Natural killer cell (primary cell): ENCODE measurements at regions of chr2 and their contacts with region 1.

Region 1: GRCh38 chr2:43131024-43131889 is 95.1 kb downstream of the ZFP36L2 start:
- DNase-seq: peak; percentile 82 to 92
- ATAC-seq: peak; percentile 63 to 81 (median 72)
- H3K4me3 ChIP-seq: no peak overlapping the region
- H3K4me3 Mint-ChIP-seq: peak overlapping the region; percentile 63
- H3K27ac ChIP-seq: peak overlapping the region; percentile 92
- H3K27ac Mint-ChIP-seq: peak overlapping the region; percentile 87 to 96
- H3K4me1 ChIP-seq: peaks cover 95% of the 10 kb centered on the region
- H3K4me1 Mint-ChIP-seq: peaks cover 80 to 89% of the 10 kb centered on the region in 2 donors
- H3K27me3 ChIP-seq: no peaks in the 10 kb centered on the region
- H3K27me3 Mint-ChIP-seq: no peaks in the 10 kb centered on the region
- CTCF ChIP-seq: peak; percentile 57

Region 2: GRCh38 chr2:42964439-42965083 is 166.7 kb before region 1 on chr2:
- intact Hi-C with region 1: loop called (anchors 5 kb)
- DNase-seq: no peak
- ATAC-seq: peak in 1 of 3 donors; percentile 54
- H3K4me3 ChIP-seq: no peak overlapping the region
- H3K4me3 Mint-ChIP-seq: no peak overlapping the region
- H3K27ac ChIP-seq: no peak overlapping the region
- H3K27ac Mint-ChIP-seq: no peak overlapping the region
- H3K4me1 ChIP-seq: peaks cover 60% of the 10 kb centered on the region
- H3K4me1 Mint-ChIP-seq: peaks cover 22 to 45% of the 10 kb centered on the region in 2 donors
- H3K27me3 ChIP-seq: no peaks in the 10 kb centered on the region
- H3K27me3 Mint-ChIP-seq: no peaks in the 10 kb centered on the region
- CTCF ChIP-seq: no peak

Region 3: GRCh38 chr2:43174368-43174916 is 43.2 kb after region 1 on chr2:
- intact Hi-C with region 1: loop called (anchors 1 kb)
- DNase-seq: peak; percentile 59 to 92
- ATAC-seq: peak; percentile 69 to 83 (median 82)
- H3K4me3 ChIP-seq: peak overlapping the region; percentile 8
- H3K4me3 Mint-ChIP-seq: peak overlapping the region; percentile 88
- H3K27ac ChIP-seq: peak overlapping the region; percentile 94
- H3K27ac Mint-ChIP-seq: peak overlapping the region; percentile 99
- H3K4me1 ChIP-seq: peaks cover 96% of the 10 kb centered on the region
- H3K4me1 Mint-ChIP-seq: peaks cover 45 to 73% of the 10 kb centered on the region in 2 donors
- H3K27me3 ChIP-seq: no peaks in the 10 kb centered on the region
- H3K27me3 Mint-ChIP-seq: no peaks in the 10 kb centered on the region
- CTCF ChIP-seq: no peak

Region 4: GRCh38 chr2:43226558-43226954 is 95.3 kb after region 1 on chr2 and contains the start of gene ZFP36L2:
- intact Hi-C with region 1: loop called (anchors 1 kb)
- DNase-seq: peak; percentile 95 to 96
- ATAC-seq: peak; percentile 60 to 83 (median 74)
- H3K4me3 ChIP-seq: peak within 1 kb of the TSS; percentile 97
- H3K4me3 Mint-ChIP-seq: peak within 1 kb of the TSS; percentile 98
- H3K27ac ChIP-seq: peak within 1 kb of the TSS; percentile 97
- H3K27ac Mint-ChIP-seq: peak within 1 kb of the TSS; percentile 90 to 99
- H3K4me1 ChIP-seq: peaks cover 32% of the 10 kb centered on the region
- H3K4me1 Mint-ChIP-seq: peaks cover 44 to 50% of the 10 kb centered on the region in 2 donors
- H3K27me3 ChIP-seq: no peaks in the 10 kb centered on the region
- H3K27me3 Mint-ChIP-seq: no peaks in the 10 kb centered on the region
- CTCF ChIP-seq: no peak
- total RNA-seq, gene ZFP36L2: 376 to 428 (median 418) TPM

Region 5: DNA sequence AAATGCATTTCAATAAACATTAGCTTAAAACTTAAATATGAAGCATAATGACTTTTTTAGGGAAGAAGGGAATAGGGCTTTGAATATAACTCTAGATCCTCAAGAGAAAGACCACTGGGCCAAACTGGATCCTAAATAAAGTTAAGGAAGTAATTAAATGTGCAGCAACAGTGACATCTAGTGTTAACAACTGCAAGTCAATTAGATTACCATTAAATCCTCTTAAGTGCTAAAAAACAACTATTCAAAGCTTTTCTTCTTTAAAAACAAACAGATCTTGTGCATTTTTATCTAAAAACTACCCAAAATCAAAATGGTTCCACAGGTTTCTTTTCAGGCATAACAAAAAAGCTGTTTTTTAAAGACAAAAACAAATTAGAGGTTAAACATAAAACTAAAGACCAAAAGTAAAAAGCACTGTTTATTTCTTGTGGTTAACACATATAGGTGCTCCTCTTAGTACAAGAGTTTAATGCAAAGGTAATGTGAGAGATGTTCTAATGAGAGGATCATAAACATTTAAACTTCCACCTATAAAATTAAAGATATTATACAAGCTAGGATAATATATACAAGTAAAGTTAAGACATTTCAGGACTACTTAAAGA is 353.2 kb after region 1 on chr2:
- intact Hi-C with region 1: loop called (anchors 1 kb)
- DNase-seq: peak in 1 of 2 donors; percentile 82
- ATAC-seq: peak in 2 of 3 donors; percentile 44 to 63
- H3K4me3 ChIP-seq: no peak overlapping the region
- H3K4me3 Mint-ChIP-seq: no peak overlapping the region
- H3K27ac ChIP-seq: no peak overlapping the region
- H3K27ac Mint-ChIP-seq: no peak overlapping the region
- H3K4me1 ChIP-seq: no peaks in the 10 kb centered on the region
- H3K4me1 Mint-ChIP-seq: peaks cover 9% of the 10 kb centered on the region in 2 donors
- H3K27me3 ChIP-seq: no peaks in the 10 kb centered on the region
- H3K27me3 Mint-ChIP-seq: no peaks in the 10 kb centered on the region
- CTCF ChIP-seq: peak; percentile 84